Activated T-helper 2 cell treated with anti-CD3 and anti-CD28 coated beads, Interferon-gamma antibody, Interleukin-2, Interleukin-4, amounts not matched to agents 10 μg/mL and 5 μg/mL and 100 μg/mL, durations not matched to agents 14 hours and 24 hours and 36 hours (primary cell): ENCODE measurements at regions of chr1 and their contacts with region 1.

Region 1: DNA sequence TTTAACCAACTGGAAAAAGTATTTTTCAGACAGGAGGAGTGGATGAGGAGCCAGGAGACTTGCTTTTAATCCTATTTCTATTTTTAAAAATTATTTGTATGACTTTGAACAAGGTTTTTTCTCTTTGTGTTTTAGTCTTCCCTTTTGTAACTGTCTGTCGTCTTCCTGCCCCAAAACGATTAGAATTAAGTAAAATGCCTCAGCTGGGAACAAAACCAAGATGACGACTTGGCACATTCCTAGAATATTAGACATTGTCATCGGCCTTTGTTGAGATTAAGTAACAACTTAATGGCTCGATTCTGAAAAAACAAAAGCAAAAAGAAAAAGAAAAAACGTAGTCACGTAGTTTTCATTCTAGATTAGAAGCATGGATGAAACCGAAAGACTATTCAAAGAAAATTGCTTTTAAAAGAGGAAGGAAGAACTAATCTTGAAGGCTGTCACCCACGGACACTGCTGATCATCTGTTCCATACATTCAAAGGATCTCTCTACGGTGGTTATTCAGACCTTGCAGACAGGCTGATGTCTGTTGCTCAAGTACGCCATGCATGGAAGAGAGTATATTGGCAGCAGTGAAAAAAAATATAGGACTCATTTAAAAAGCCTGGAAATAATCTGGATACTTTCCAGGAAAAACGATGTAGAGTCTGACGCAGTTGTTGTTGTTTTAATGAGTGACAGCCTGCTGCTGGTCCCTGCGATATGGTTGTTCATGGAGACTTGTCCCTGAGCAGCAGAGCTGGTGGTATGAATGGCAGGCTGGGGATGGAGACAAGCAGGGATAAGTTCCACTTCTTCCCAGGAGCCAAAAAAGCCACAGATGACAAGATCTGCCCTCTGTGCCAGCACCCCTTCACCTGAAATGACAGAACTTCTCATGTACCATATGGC is 16.8 kb downstream of the GNG4 start:
- DNase-seq: no peak
- H3K4me3 Mint-ChIP-seq: peak overlapping the region; percentile 38
- H3K27ac Mint-ChIP-seq: peak overlapping the region; percentile 74
- H3K4me1 Mint-ChIP-seq: peaks cover 25% of the 10 kb centered on the region
- H3K27me3 Mint-ChIP-seq: no peaks in the 10 kb centered on the region

Region 2: GRCh38 chr1:235597867-235598553 is 34.7 kb before region 1 on chr1:
- intact Hi-C with region 1: no loop called
- DNase-seq: no peak
- H3K4me3 Mint-ChIP-seq: no peak overlapping the region
- H3K27ac Mint-ChIP-seq: no peak overlapping the region
- H3K4me1 Mint-ChIP-seq: peaks cover 8% of the 10 kb centered on the region
- H3K27me3 Mint-ChIP-seq: peaks cover 3% of the 10 kb centered on the region

Region 3: DNA sequence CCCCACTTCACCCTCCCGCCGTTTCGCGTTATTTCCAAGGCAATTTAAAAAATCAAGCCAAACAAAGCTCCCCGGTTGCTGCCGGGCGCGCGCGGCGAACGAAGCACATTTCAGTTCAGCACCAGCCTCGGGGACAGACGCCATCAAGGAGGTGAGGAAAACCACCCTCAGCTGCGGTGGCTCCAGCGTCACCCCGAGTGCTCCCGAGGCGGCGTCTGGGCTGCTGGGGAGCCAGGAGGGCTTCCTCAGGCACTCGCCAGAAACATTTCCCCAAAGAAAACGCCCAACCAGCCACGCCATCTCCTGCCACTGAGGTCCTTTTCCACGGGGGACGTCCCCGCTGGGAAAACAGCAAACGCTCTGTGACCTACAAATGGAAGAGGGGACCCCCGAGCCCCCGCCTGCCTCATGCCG is 16.2 kb after region 1 on chr1:
- intact Hi-C with region 1: loop called (anchors 1 kb)
- DNase-seq: peak; percentile 50
- H3K4me3 Mint-ChIP-seq: peak overlapping the region; percentile 93
- H3K27ac Mint-ChIP-seq: peak overlapping the region; percentile 92
- H3K4me1 Mint-ChIP-seq: peaks cover 50% of the 10 kb centered on the region
- H3K27me3 Mint-ChIP-seq: peaks cover 45% of the 10 kb centered on the region